ENCODE measurements at regions of chr15 and their contacts with region 1.

Region 1: DNA sequence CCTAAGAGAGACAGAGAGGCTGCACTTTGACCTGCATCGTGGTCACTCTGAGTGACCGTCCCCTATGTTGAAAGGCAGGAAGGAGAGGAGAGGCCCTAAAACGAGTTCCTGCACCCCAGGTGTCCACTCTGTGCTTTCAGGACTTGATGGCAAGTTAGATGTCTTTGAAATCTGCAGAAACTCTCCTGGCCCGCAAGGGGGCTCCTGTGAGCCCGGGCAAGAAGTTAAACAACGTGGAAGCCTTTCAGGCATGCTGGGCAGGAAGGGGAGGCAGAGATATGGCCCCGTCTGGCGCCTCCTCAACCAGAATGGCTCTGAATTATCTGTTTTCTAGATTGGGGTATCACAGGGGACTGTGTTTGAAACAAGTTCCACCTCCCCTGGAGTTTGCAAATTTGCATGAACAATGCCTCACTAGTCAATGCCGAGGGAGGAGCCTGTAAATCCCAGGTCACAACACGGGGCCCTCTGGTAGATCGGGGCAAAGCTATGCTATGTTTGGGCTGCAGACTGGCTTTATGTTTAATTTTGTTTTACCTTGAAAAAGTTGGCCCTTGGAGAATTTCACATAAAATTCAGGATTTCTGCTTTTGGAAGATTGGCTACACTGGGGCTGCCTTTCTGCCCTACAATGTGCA is 9.8 kb downstream of the CTXND1 start:
- DNase-seq: peak; percentile 33
- ATAC-seq: peak; percentile 49

Region 2: GRCh38 chr15:79887054-79887915 is 355.0 kb before region 1 on chr15:
- intact Hi-C with region 1: no loop called
- DNase-seq: no peak
- ATAC-seq: no peak

Region 3: DNA sequence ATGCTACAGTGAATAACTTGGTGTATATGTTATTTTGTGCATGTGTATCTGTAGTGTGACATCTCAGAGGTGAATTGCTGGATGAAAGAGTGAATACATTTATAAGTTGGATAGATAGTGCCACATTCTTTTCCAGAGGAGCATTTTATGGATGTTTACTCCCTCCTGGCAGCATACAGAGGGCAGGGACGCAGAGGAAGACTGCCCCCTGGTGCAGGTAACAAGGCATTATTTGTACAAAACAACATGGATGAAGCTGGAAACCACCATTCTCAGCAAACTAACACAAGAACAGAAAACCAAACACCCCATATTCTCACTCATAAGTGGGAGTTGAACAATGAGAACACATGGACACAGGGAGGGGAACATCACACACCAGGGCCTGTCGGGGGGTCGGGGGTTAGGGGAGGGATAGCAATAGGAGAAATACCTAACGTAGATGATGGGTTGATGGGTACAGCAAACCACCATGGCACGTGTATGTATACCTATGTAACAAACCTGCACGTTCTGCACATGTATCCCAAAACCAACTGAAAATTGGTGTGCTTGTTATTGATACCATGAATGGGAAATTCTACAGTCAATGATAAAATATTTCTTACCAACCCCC is 67.6 kb after region 1 on chr15:
- intact Hi-C with region 1: loop called (anchors 5 kb)
- DNase-seq: no peak
- ATAC-seq: peak; percentile 62